Heart left ventricle (tissue), 16 donors: ENCODE measurements at regions of chr7 and their contacts with region 1.

Region 1: GRCh38 chr7:64802699-64803098 is 8.5 kb downstream of the ZNF138 start:
- DNase-seq: no peak
- ATAC-seq: no peak
- H3K4me3 ChIP-seq: no peak overlapping the region
- H3K27ac ChIP-seq: no peak overlapping the region
- H3K4me1 ChIP-seq: peaks cover 0 to 16% (median 0%) of the 10 kb centered on the region in 12 donors
- H3K27me3 ChIP-seq: no peaks in the 10 kb centered on the region
- CTCF ChIP-seq: no peak
- POLR2A ChIP-seq: no peak

Region 2: DNA sequence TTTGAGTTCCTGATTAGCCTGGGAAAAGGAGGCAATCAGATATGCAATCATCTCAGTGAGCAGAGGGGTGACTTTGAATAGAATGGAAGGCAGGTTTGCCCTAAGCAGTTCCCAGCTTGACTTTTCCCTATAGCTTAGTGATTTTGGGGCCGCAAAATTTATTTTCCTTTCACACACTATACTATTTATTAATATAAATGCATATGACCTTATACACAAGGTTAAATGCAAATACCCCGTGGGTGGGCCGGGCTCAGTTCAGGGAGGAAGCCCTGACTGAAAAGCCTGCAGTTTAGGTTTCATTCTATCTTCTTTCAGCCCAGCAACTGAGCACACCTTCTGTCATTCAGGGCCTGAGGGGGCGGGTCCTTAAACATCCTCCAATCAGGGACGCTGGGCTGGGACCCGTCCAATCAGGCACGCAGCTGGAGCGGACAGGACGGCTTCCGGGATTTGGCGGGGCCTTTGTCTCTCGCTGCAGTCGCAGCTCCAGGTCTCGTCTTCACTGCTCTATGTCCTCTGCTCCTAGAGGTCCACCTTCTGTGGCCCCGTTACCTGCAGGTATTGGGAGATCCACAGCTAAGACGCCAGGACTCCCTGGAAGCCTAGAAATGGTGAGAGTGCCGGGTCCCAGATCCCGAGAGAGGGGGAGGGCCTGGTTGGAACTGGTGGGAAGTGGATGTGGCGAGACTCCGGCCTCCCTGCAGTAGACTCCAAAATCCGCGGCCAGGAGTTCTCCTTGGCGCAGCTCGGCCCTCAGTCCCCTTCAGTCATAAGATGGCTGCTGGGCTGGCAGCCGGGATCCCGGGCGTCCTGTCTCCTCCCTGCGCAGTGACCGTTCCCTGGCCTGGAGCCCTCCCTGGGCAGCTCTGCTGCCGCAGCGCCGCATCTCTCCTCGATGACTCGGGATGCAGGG is 100.4 kb after region 1 on chr7 and contains the start of gene ZNF273:
- intact Hi-C with region 1: loop called in 1 of 10 experiments (anchors 10 kb)
- DNase-seq: peak; percentile 92 to 96 (median 94)
- ATAC-seq: peak; percentile 94 to 99 (median 99)
- H3K4me3 ChIP-seq: peak within 1 kb of the TSS; percentile 53 to 94 (median 80)
- H3K27ac ChIP-seq: peak within 1 kb of the TSS in 10 of 12 donors; percentile 23 to 76 (median 64)
- H3K4me1 ChIP-seq: peaks cover 0 to 18% (median 5%) of the 10 kb centered on the region in 12 donors
- H3K27me3 ChIP-seq: no peaks in the 10 kb centered on the region
- CTCF ChIP-seq: no peak
- POLR2A ChIP-seq: no peak
- total RNA-seq, gene ZNF273: 0.56 to 4.2 (median 1.4) TPM

Region 3: DNA sequence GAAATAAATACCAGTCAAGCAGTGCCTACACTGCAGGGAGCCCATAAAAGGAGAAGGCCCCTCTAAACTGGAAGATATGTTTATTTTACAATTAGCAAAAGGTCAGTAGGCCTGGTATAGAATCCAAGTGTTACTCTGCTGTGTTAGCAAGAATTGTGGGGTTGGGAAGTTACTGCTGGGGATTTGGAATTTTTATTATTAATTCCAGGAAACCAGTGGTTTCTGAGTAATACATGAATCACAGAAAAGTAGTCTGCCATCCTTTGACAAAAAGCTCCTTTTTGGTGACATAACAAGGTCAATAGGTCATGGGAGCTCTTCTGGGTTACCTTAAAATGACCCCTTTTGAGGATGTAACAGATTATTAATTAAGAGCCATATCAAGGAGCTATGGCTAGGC is 638.3 kb after region 1 on chr7:
- intact Hi-C with region 1: no loop called
- DNase-seq: no peak
- ATAC-seq: peak in 1 of 4 donors; percentile 43
- H3K4me3 ChIP-seq: no peak overlapping the region
- H3K27ac ChIP-seq: no peak overlapping the region
- H3K4me1 ChIP-seq: no peaks in the 10 kb centered on the region
- H3K27me3 ChIP-seq: no peaks in the 10 kb centered on the region
- CTCF ChIP-seq: no peak
- POLR2A ChIP-seq: no peak